Activated B cell treated with CpG ODN at 0.5 μM for 24 hours (primary cell): ENCODE measurements at regions of chr18 and their contacts with region 1.

Region 1: GRCh38 chr18:21636769-21637168 is 24.7 kb downstream of the SNRPD1 start:
- DNase-seq: no peak
- ATAC-seq: no peak
- H3K4me3 Mint-ChIP-seq: no peak overlapping the region
- H3K27ac Mint-ChIP-seq: peak overlapping the region; percentile 46
- H3K4me1 Mint-ChIP-seq: peaks cover 15% of the 10 kb centered on the region
- H3K27me3 Mint-ChIP-seq: no peaks in the 10 kb centered on the region
- CTCF ChIP-seq: no peak

Region 2: GRCh38 chr18:21571772-21572171 is 65.0 kb before region 1 on chr18:
- CTCF ChIA-PET with region 1: no interaction called
- POLR2A ChIA-PET with region 1: no interaction called
- intact Hi-C with region 1: no loop called
- DNase-seq: no peak
- ATAC-seq: no peak
- H3K4me3 Mint-ChIP-seq: no peak overlapping the region
- H3K27ac Mint-ChIP-seq: no peak overlapping the region
- H3K4me1 Mint-ChIP-seq: no peaks in the 10 kb centered on the region
- H3K27me3 Mint-ChIP-seq: no peaks in the 10 kb centered on the region
- CTCF ChIP-seq: no peak

Region 3: GRCh38 chr18:21593540-21594257 is 43.1 kb before region 1 on chr18:
- CTCF ChIA-PET with region 1: no interaction called
- POLR2A ChIA-PET with region 1: no interaction called
- intact Hi-C with region 1: no loop called
- DNase-seq: no peak
- ATAC-seq: peak; percentile 25
- H3K4me3 Mint-ChIP-seq: no peak overlapping the region
- H3K27ac Mint-ChIP-seq: no peak overlapping the region
- H3K4me1 Mint-ChIP-seq: peaks cover 24% of the 10 kb centered on the region
- H3K27me3 Mint-ChIP-seq: no peaks in the 10 kb centered on the region
- CTCF ChIP-seq: no peak

Region 4: DNA sequence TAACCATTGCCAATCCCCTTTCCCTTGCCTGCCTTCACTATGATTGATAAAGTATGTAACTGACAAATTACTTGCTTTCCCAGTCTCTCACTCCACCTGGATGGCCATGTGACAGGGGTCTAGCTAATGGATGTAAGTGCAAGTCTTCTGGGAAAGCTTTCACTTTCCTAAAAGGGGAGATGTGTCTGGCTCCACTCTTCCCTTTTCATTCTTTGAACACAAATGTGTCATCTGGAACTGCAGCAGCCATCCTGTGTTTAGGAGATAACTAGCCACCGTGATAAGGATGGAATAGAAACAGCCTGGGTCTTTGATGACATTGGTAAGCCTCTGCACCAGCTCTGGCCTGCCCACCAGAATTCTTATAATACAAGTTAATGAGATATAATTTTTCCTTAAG is 13.5 kb after region 1 on chr18:
- CTCF ChIA-PET with region 1: no interaction called
- POLR2A ChIA-PET with region 1: interaction called, 11 read pairs
- intact Hi-C with region 1: no loop called
- DNase-seq: no peak
- ATAC-seq: no peak
- H3K4me3 Mint-ChIP-seq: no peak overlapping the region
- H3K27ac Mint-ChIP-seq: no peak overlapping the region
- H3K4me1 Mint-ChIP-seq: no peaks in the 10 kb centered on the region
- H3K27me3 Mint-ChIP-seq: no peaks in the 10 kb centered on the region
- CTCF ChIP-seq: no peak

Region 5: DNA sequence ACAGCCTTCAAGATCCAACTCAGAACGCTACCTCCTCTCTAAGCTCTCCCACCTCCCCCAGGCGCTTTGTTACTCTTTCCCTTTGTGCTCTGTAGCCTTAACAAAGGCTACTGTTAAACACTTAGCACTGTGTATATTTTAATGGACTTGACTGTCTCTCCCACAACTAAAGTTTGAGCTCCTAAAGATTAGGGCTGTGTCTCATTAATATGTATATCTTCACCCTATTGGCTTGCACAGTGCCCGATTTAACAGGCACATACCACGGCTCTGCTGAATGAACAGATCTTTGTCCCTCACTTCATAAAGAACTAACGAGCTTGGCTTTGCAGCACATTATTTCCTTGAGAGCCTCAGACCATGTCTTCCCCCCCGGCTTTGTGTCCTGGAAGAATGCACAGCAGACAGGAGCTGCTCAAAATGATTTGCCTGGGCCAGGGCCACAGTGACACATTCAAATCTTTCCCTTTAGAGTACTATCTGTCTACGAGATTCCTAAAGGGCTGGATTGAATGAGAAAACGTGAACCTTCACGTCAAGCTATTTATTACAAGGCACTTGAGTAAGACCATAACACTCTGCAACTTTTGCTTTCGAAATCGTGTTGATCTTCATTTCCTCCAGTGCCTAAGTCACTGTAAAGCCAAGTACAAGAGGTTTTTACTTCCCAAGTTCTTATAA is 45.7 kb after region 1 on chr18:
- CTCF ChIA-PET with region 1: no interaction called
- POLR2A ChIA-PET with region 1: interaction called, 3 read pairs
- intact Hi-C with region 1: loop called (anchors 5 kb)
- DNase-seq: no peak
- ATAC-seq: peak; percentile 54
- H3K4me3 Mint-ChIP-seq: no peak overlapping the region
- H3K27ac Mint-ChIP-seq: no peak overlapping the region
- H3K4me1 Mint-ChIP-seq: peaks cover 30% of the 10 kb centered on the region
- H3K27me3 Mint-ChIP-seq: no peaks in the 10 kb centered on the region
- CTCF ChIP-seq: no peak